Naive thymus-derived CD4-positive, alpha-beta T cell (primary cell): ENCODE measurements at regions of chr22 and their contacts with region 1.

Region 1: DNA sequence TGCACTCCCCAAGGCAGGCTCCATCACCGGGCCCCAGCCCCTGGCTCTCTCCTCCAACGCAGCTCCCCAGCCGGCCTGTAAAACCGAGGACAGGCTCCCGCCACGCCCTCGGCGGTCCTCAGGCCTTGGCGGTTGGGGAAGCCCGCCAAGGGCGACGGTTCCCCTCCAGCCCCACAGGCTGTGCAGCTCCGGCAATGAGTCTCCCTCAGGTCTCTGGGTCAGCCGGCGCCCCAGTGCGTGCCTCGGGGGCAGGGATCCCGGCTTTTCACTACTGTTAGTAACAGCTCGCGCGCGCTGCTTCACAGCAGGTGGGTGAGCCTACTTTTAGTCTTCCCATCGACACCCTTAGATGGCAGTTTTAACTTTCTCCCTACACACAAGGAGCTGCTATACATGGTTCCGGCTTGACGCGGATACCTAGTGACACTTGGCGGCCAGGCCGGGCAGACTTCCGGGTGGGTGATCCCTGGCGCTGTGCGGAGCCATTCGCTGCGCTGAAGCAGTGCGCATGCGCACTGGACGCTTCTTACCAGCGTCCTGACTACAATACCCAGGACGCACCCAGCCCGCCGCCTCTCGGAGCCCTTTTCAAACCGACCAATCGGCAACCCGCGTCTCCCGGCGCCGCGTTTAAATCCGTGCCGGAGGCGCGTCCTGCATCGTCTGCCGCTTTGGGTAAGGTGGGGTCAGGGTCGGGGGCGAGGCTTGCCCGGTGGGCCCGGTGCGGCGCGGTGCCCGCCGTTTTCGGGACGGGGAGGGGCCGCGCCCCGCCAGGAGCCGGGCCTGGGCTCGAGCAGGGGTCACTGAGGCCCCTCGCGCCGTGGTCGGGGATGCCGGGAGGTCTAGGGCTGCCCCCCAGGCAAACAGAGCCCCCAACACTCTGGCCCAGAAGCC is at the start of gene GTSE1:
- DNase-seq: peak; percentile 90 to 97 (median 96)
- ATAC-seq: peak; percentile 99
- H3K4me3 ChIP-seq: peak within 1 kb of the TSS; percentile 72
- H3K4me3 Mint-ChIP-seq: peak within 1 kb of the TSS; percentile 87 to 97 (median 91)
- H3K27ac ChIP-seq: peak within 1 kb of the TSS; percentile 77
- H3K27ac Mint-ChIP-seq: peak within 1 kb of the TSS; percentile 91 to 99 (median 97)
- H3K4me1 ChIP-seq: peaks cover 8 to 15% of the 10 kb centered on the region in 2 donors
- H3K4me1 Mint-ChIP-seq: peaks cover 14 to 60% (median 27%) of the 10 kb centered on the region in 7 donors
- H3K27me3 ChIP-seq: no peaks in the 10 kb centered on the region
- H3K27me3 Mint-ChIP-seq: peaks cover 0 to 11% (median 9%) of the 10 kb centered on the region in 5 donors
- total RNA-seq, gene GTSE1: 0.30 to 55.5 (median 0.61) TPM in 3 of 5 experiments, not detected in the others

Region 2: DNA sequence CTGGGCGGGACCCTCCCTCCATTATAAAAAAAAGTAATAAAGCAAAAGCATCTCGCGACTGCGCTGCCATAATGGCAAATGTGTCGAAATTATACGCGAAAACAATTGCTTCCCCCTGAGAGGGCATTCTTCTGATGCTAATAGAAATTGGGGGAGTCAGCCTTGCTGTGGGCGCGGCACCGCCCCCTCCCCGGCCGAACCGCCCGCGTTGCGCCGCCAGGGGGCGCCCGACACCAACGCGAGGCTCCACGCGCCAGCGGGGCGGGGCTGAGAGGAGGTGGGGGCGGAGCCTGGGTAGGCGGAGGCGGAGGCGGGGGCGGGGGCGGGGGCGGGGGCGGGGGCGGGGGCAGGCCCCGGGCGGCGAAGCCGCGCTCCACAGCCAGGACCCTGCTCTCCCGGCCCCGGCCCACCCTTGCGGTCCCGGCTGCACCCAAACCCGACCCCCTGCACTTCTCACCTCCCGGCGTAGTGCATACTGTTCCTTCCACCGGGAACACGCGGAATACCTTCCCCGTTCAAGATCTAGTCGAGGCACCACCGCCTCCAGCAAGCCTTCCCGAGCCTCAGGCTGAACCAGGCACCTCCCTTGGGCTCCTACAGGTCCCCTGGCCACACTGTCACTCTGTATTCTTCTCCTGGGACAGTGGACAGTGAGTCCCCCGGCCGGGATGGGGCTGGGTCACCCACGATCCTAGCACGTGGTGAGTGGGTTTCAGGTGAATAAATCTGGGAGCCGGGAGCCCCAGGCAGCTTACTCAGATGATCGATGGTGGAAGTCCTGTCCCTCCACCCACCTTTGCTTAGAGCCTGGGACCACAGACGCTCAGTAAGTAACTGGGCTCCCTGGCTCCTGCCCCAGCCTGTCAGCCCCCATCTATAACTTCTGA is 1027.3 kb before region 1 on chr22:
- CTCF ChIA-PET with region 1: no interaction called
- POLR2A ChIA-PET with region 1: no interaction called
- intact Hi-C with region 1: loop called in 1 of 2 experiments (anchors 5 kb)
- DNase-seq: peak; percentile 82 to 99 (median 90)
- ATAC-seq: peak; percentile 100
- H3K4me3 ChIP-seq: peak overlapping the region; percentile 85
- H3K4me3 Mint-ChIP-seq: peak overlapping the region; percentile 71 to 86 (median 84)
- H3K27ac ChIP-seq: peak overlapping the region; percentile 28
- H3K27ac Mint-ChIP-seq: peak overlapping the region; percentile 43 to 85 (median 72)
- H3K4me1 ChIP-seq: peaks cover 4% of the 10 kb centered on the region in 2 donors
- H3K4me1 Mint-ChIP-seq: peaks cover 4 to 11% (median 8%) of the 10 kb centered on the region in 7 donors
- H3K27me3 ChIP-seq: no peaks in the 10 kb centered on the region
- H3K27me3 Mint-ChIP-seq: peaks cover 0 to 55% (median 0%) of the 10 kb centered on the region in 5 donors

Region 3: DNA sequence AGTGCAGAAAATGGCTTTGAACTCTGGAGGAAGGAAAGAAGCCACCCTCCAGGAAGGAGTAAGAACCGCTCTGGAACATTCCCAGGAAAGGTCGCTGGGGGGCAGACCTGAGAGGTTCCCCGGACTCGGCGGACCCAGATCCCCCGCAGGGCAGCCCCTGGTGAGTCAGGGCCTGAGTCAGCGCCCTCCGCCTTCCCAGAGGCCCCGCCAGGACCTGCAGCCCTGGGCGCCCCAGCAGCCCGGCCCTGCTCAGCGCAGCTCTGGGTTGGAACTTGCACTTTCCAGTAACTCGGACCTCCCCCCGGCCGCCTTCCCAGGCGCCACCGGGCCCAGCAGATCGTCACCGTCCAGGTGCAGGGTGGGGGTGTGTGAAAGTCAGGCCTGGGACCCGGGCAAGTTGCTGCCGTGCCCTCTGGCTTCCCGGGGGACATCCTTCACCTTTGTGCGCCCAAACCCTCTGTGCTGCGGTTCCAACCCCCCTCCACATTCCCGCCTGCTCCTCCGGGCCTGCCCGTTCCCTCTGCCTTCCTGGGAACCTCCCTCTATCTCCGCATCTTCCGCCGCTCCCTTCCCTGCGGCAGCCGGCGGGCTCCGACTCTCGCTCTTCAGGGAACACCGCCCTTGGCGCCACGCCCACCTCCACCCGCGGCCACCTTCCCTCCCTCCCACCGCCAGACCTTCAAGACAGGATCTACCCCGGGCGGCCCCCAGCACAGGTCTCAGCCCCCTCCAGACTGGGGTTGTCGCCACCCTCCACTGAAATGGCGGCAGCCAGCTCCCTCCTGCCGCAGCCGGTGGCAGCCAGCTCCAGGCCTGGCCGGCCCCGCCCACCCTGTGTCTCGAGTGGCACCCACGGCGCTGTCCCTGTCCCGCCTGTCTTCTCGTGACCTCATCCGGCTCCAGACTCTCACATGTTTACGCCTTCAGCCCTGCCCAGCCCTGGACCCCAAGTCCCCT is 282.8 kb before region 1 on chr22:
- CTCF ChIA-PET with region 1: interaction called, 5 read pairs
- POLR2A ChIA-PET with region 1: no interaction called
- intact Hi-C with region 1: loop called in 1 of 2 experiments (anchors 1 kb)
- DNase-seq: peak; percentile 53 to 88 (median 66)
- ATAC-seq: peak; percentile 91
- H3K4me3 ChIP-seq: peak overlapping the region; percentile 78
- H3K4me3 Mint-ChIP-seq: peak overlapping the region; percentile 83 to 91 (median 89)
- H3K27ac ChIP-seq: peak overlapping the region; percentile 80
- H3K27ac Mint-ChIP-seq: peak overlapping the region; percentile 79 to 94 (median 87)
- H3K4me1 ChIP-seq: peaks cover 3 to 5% of the 10 kb centered on the region in 2 donors
- H3K4me1 Mint-ChIP-seq: peaks cover 0 to 13% (median 4%) of the 10 kb centered on the region in 7 donors
- H3K27me3 ChIP-seq: no peaks in the 10 kb centered on the region
- H3K27me3 Mint-ChIP-seq: peaks cover 0 to 5% (median 0%) of the 10 kb centered on the region in 5 donors

Region 4: DNA sequence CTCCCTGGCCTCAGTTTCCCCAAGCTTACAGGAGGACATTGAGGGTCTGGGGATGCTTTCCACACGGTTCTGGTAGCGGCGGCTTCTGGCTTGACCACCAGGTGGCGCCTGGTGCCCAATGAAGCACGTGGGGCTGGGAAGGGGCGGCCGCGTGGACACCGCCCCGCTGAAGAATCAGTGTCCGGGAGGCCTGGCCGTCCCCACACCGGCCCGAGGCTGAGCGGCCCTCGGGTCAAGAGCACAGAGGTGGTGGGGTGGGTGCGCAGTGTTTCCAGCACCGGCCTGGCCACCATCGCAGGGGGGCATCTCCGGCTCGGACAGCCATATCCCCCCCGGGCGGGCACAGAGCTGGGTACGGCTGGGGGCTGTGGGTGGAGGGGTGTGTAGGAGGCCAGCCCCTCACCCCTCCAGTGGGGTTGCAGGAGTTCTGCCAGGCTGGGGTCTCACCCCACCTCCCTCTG is 174.0 kb before region 1 on chr22:
- CTCF ChIA-PET with region 1: interaction called, 12 read pairs
- POLR2A ChIA-PET with region 1: no interaction called
- intact Hi-C with region 1: loop called (anchors 1 kb)
- DNase-seq: peak; percentile 34 to 80 (median 57)
- ATAC-seq: peak; percentile 79
- H3K4me3 ChIP-seq: no peak overlapping the region
- H3K4me3 Mint-ChIP-seq: no peak overlapping the region
- H3K27ac ChIP-seq: no peak overlapping the region
- H3K27ac Mint-ChIP-seq: no peak overlapping the region
- H3K4me1 ChIP-seq: no peaks in the 10 kb centered on the region
- H3K4me1 Mint-ChIP-seq: no peaks in the 10 kb centered on the region
- H3K27me3 ChIP-seq: no peaks in the 10 kb centered on the region
- H3K27me3 Mint-ChIP-seq: no peaks in the 10 kb centered on the region

Region 5: GRCh38 chr22:46250035-46250782 is 46.3 kb before region 1 on chr22 and contains the start of gene CDPF1:
- CTCF ChIA-PET with region 1: interaction called, 3 read pairs
- POLR2A ChIA-PET with region 1: interaction called, 19 read pairs
- intact Hi-C with region 1: loop called (anchors 1 kb)
- DNase-seq: peak; percentile 82 to 96 (median 86)
- ATAC-seq: peak; percentile 97
- H3K4me3 ChIP-seq: peak within 1 kb of the TSS; percentile 71
- H3K4me3 Mint-ChIP-seq: peak within 1 kb of the TSS; percentile 74 to 93 (median 83)
- H3K27ac ChIP-seq: peak within 1 kb of the TSS; percentile 77
- H3K27ac Mint-ChIP-seq: peak within 1 kb of the TSS; percentile 51 to 92 (median 77)
- H3K4me1 ChIP-seq: peaks cover 5 to 7% of the 10 kb centered on the region in 2 donors
- H3K4me1 Mint-ChIP-seq: peaks cover 17 to 32% (median 29%) of the 10 kb centered on the region in 7 donors
- H3K27me3 ChIP-seq: no peaks in the 10 kb centered on the region
- H3K27me3 Mint-ChIP-seq: no peaks in the 10 kb centered on the region
- total RNA-seq, gene CDPF1: 4.2 to 13.8 (median 11.7) TPM

Region 6: GRCh38 chr22:46335201-46336118 is 39.0 kb after region 1 on chr22 and contains the start of gene TRMU:
- CTCF ChIA-PET with region 1: no interaction called
- POLR2A ChIA-PET with region 1: interaction called, 6 read pairs
- intact Hi-C with region 1: loop called in 1 of 2 experiments (anchors 1 kb)
- DNase-seq: peak; percentile 32 to 83 (median 60)
- ATAC-seq: peak; percentile 94
- H3K4me3 ChIP-seq: peak within 1 kb of the TSS; percentile 87
- H3K4me3 Mint-ChIP-seq: peak within 1 kb of the TSS; percentile 92 to 100 (median 95)
- H3K27ac ChIP-seq: peak within 1 kb of the TSS; percentile 82
- H3K27ac Mint-ChIP-seq: peak within 1 kb of the TSS; percentile 77 to 97 (median 94)
- H3K4me1 ChIP-seq: peaks cover 7 to 9% of the 10 kb centered on the region in 2 donors
- H3K4me1 Mint-ChIP-seq: peaks cover 23 to 50% (median 38%) of the 10 kb centered on the region in 7 donors
- H3K27me3 ChIP-seq: no peaks in the 10 kb centered on the region
- H3K27me3 Mint-ChIP-seq: no peaks in the 10 kb centered on the region
- total RNA-seq, gene TRMU: 56.9 to 92.1 (median 70.3) TPM